ENCODE measurements at regions of chr5 and their contacts with region 1.

Region 1: DNA sequence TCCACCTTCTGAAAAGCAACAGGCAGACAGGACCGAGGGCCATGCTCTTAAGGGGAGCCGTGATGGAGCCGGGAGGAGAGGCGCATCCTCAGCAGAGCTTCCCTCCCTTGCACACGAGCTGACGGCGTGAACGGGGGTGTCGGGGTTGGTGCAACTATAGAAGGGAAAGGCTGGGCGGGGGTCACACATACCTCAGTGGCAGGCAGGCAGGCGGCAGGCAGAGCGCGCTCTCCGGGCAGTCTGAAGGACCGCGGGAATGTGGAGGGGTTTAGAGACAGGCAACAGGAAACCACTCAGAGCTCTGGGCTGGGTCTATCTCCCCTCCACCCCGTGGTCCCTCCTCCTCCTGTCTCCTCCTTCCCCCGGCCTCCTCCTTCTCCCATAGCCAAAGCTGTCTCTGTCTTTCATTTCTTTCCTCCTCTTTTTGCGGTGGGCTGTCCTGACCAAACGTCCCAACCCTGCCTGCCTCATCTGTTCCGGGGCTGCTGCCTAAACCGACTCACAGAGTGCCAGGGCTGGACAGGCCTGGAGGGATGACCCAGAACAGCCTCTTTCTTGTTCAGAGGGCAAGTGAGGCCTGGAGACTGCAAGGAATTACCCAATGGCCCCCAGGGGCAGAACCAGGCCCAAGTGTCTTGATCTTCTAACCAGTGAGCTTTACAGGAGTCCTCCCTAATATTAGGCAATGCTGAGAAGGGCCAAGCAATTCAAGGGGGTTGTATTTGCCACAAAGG is at the start of gene SPARC:
- DNase-seq: peak; percentile 88
- H3K4me3 ChIP-seq: peak within 1 kb of the TSS; percentile 83
- H3K27me3 ChIP-seq: no peaks in the 10 kb centered on the region
- CTCF ChIP-seq: peak; percentile 14; the same call in 1 of the 2 replicates
- polyA plus RNA-seq, gene SPARC: 14,419 and 17,277 TPM in 2 replicates

Region 2: GRCh38 chr5:151492729-151493128 is 194.1 kb before region 1 on chr5:
- CTCF ChIA-PET with region 1: no interaction called
- POLR2A ChIA-PET with region 1: no interaction called
- DNase-seq: no peak
- H3K4me3 ChIP-seq: no peak overlapping the region
- H3K27me3 ChIP-seq: no peaks in the 10 kb centered on the region
- CTCF ChIP-seq: no peak

Region 3: GRCh38 chr5:151659001-151659754 is 27.7 kb before region 1 on chr5:
- CTCF ChIA-PET with region 1: interaction called, 30 read pairs
- POLR2A ChIA-PET with region 1: interaction called, 8 read pairs
- DNase-seq: no peak
- H3K4me3 ChIP-seq: no peak overlapping the region
- H3K27me3 ChIP-seq: no peaks in the 10 kb centered on the region
- CTCF ChIP-seq: peak; percentile 85

Region 4: GRCh38 chr5:151664694-151665585 is 21.9 kb before region 1 on chr5:
- CTCF ChIA-PET with region 1: interaction called, 30 read pairs
- POLR2A ChIA-PET with region 1: interaction called, 8 read pairs
- DNase-seq: no peak
- H3K4me3 ChIP-seq: no peak overlapping the region
- H3K27me3 ChIP-seq: no peaks in the 10 kb centered on the region
- CTCF ChIP-seq: no peak

Region 5: GRCh38 chr5:151675611-151676313 is 11.1 kb before region 1 on chr5:
- CTCF ChIA-PET with region 1: interaction called, 29 read pairs
- POLR2A ChIA-PET with region 1: interaction called, 4 read pairs
- DNase-seq: no peak
- H3K4me3 ChIP-seq: no peak overlapping the region
- H3K27me3 ChIP-seq: no peaks in the 10 kb centered on the region
- CTCF ChIP-seq: no peak

Region 6: DNA sequence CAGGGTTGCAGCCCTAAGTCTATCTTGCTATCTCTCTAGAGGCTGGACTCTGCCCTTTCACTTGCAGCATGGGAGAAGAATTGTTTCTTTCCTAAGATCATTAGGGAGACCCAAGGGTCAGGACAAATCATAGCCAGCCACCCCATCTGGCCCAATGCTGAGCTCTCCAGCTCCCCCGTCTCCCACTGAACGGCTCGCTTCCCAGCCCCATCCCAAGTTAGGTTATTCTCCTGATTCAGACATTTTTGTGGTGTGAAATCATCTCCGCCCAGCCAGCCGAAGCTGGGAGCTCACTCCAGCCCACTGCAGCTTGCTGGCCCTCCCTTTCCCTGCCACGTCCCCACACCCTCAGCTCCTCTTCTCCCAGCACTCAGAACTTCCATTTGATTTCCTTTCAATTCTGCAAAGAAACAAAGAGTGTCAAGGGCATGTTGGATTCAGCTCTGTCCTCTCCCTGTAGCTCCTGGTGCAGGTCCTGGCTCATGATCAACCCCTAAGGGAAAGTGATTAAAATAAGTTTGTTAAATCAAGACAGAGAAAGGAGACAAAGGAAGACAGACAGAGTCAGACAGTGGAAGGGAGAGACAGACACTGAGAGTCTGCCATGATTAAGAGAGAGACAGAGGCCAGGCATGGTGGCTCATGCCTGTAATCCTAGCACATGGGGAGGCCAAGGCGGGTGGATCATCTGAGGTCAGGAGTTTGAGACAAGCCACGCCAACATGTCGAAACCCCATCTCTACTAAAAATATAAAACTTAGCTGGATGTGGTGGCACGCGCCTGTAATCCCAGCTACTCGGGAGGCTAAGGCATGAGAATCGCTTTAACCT is 12.4 kb after region 1 on chr5:
- CTCF ChIA-PET with region 1: interaction called, 10 read pairs
- POLR2A ChIA-PET with region 1: interaction called, 62 read pairs
- DNase-seq: peak; percentile 93
- H3K4me3 ChIP-seq: no peak overlapping the region
- H3K27me3 ChIP-seq: no peaks in the 10 kb centered on the region
- CTCF ChIP-seq: no peak

Region 7: GRCh38 chr5:151719228-151720000 is 32.6 kb after region 1 on chr5:
- CTCF ChIA-PET with region 1: interaction called, 54 read pairs
- POLR2A ChIA-PET with region 1: interaction called, 20 read pairs
- DNase-seq: no peak
- H3K4me3 ChIP-seq: no peak overlapping the region
- H3K27me3 ChIP-seq: no peaks in the 10 kb centered on the region
- CTCF ChIP-seq: peak; percentile 63